Psoas muscle (tissue), 8 donors: ENCODE measurements at regions of chr11 and their contacts with region 1.

Region 1: DNA sequence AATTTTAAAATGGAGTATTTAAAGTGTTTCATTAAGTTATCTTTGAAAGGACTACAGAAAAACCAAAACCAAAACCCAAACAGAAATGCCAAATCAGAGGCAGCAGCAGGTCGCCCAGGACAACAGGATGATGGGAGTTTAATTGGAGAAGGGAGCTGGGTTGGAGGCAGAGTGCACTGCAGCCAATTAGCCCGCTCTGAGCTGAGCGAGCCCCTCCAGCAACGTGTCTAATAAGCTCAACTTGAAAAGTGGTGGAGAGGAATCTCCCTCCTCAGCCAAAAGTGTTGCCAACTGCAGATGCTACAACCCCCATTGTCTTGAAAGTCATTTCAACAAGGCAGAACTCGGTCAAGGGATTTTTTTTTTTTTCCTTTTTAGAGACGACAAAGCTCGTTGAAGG is 323.9 kb downstream of the CADM1 start:
- DNase-seq: no peak
- ATAC-seq: no peak
- H3K4me3 ChIP-seq: no peak overlapping the region
- H3K27ac ChIP-seq: no peak overlapping the region
- H3K4me1 ChIP-seq: peaks cover 24% of the 10 kb centered on the region
- H3K27me3 ChIP-seq: no peaks in the 10 kb centered on the region
- CTCF ChIP-seq: no peak

Region 2: DNA sequence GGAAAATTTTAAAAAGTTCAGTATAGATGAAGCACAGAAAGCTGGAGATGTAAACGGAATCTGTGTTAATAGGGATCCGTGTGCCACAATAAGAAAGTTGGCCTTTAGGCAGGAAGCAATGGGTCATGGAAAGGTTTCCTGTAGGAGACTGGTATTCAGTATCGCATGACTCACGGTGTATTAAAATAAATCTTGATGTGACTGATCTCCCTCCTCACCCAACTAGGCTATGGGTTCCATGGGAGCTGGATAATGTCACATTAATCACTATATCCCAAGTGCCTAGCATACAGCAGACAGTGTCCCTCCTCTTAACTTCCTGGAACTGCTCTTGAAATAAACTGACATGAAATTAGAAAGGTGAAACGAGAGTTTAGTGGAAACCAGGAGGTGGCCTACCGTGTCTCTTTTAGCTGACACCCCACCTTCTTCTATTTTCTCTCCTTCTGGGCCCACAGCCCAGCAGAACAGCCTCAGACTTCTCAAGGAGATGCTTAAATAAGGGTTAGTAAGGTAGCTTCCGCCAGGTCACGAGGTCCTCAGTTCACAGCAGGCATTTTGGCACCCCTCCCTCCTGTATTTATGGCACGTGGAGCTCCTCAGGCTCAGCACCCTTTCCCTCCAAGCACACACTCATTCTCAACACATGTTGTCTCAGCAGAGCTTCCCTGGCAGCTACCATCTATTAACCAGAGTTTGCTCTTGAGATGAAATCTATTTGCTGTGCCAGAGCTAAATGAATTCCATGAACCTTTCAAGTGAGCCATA is 383.1 kb before region 1 on chr11:
- intact Hi-C with region 1: loop called in 1 of 2 experiments (anchors 10 kb)
- DNase-seq: peak; percentile 25 to 60
- ATAC-seq: peak; percentile 93 to 98 (median 96)
- H3K4me3 ChIP-seq: no peak overlapping the region
- H3K27ac ChIP-seq: peak overlapping the region; percentile 87
- H3K4me1 ChIP-seq: peaks cover 34% of the 10 kb centered on the region
- H3K27me3 ChIP-seq: no peaks in the 10 kb centered on the region
- CTCF ChIP-seq: no peak

Region 3: GRCh38 chr11:115132436-115133228 is 47.6 kb before region 1 on chr11:
- intact Hi-C with region 1: no loop called
- DNase-seq: no peak
- ATAC-seq: no peak
- H3K4me3 ChIP-seq: no peak overlapping the region
- H3K27ac ChIP-seq: no peak overlapping the region
- H3K4me1 ChIP-seq: no peaks in the 10 kb centered on the region
- H3K27me3 ChIP-seq: no peaks in the 10 kb centered on the region
- CTCF ChIP-seq: peak; percentile 18

Region 4: GRCh38 chr11:115144914-115145313 is 35.4 kb before region 1 on chr11:
- intact Hi-C with region 1: no loop called
- DNase-seq: no peak
- ATAC-seq: no peak
- H3K4me3 ChIP-seq: no peak overlapping the region
- H3K27ac ChIP-seq: no peak overlapping the region
- H3K4me1 ChIP-seq: no peaks in the 10 kb centered on the region
- H3K27me3 ChIP-seq: no peaks in the 10 kb centered on the region
- CTCF ChIP-seq: no peak

Region 5: DNA sequence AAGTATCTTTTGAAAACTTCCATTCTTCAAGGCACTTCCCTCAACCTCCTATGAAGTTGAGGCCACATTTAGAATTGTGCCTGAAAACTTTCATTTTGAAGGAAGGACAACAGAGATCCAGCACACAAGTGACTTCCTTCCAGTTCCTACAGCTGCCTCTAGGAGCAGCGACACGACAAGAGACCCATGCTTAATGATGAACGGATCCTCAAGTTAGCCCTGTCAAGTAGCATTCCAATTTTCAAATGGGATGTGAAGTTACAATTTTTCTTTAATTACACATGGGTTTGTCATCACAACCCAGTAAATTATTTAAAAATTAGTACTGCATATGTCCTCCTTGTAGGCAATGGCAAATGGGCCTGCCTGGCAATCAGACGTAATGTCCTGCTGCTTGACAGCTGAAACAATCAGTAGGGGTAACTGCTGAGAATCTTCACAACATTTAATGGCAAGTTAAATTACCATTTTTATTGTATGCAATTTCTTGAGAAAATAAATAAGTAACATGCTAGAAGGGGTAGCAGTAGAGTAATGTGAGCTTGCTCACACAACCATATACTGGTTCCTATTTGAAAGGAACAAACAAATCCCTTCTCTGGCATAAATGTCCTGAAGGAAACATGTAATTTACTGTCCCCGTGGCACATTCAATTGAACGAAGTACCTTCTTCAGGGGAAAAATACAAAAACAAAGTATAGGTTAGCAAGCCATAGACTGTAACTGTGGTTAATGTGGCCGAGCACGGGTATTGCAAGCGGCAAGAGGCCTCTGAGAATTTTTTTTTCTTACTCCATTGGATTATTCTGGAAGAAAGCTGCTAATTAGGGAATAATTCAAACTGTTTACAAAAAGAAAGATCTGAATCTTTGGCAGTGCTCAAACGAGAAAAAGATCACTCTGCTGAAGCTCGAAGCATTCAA is 35.7 kb after region 1 on chr11:
- intact Hi-C with region 1: no loop called
- DNase-seq: no peak
- ATAC-seq: no peak
- H3K4me3 ChIP-seq: no peak overlapping the region
- H3K27ac ChIP-seq: no peak overlapping the region
- H3K4me1 ChIP-seq: peaks cover 21% of the 10 kb centered on the region
- H3K27me3 ChIP-seq: no peaks in the 10 kb centered on the region
- CTCF ChIP-seq: peak; percentile 7